ENCODE measurements at regions of chr11 and their contacts with region 1.

Region 1: DNA sequence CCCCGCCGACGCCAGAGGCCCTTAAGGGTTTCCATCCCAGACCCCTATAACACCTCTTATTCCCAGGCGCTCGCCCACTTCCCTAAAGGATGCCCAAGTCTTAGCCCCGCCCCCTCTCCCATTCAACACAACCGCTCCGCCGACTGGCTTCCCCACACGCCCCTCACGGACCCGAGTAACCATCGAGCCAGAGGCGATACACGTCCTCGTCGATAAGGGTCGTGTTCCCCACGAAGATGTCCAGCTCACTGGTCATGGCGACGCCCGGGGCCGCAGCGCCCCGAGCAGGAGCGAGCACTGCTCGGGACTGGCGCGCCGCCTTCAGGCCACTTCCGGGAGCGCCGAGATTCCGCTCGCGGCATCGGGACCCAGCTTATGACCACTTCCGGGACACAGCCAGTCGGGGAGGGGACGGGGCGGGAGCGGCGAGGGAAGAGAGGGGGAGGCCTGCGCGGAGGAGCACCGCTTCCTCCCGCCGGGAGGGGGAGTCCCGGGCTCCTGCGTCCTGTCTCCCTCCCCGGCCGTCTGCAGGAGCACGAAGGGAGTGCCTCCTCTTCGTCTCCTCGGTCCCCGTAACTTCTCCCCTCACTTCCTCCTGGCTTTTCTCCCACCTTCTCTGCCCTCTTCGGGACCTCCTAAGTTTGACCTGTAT is at the start of gene FIBP:
- DNase-seq: peak; percentile 99
- ATAC-seq: peak; percentile 68
- H3K4me3 Mint-ChIP-seq: peak within 1 kb of the TSS; percentile 94
- H3K27ac Mint-ChIP-seq: peak within 1 kb of the TSS; percentile 95
- H3K4me1 Mint-ChIP-seq: peaks cover 57% of the 10 kb centered on the region
- H3K27me3 Mint-ChIP-seq: no peaks in the 10 kb centered on the region
- total RNA-seq, gene FIBP: 95.4 to 121 TPM

Region 2: DNA sequence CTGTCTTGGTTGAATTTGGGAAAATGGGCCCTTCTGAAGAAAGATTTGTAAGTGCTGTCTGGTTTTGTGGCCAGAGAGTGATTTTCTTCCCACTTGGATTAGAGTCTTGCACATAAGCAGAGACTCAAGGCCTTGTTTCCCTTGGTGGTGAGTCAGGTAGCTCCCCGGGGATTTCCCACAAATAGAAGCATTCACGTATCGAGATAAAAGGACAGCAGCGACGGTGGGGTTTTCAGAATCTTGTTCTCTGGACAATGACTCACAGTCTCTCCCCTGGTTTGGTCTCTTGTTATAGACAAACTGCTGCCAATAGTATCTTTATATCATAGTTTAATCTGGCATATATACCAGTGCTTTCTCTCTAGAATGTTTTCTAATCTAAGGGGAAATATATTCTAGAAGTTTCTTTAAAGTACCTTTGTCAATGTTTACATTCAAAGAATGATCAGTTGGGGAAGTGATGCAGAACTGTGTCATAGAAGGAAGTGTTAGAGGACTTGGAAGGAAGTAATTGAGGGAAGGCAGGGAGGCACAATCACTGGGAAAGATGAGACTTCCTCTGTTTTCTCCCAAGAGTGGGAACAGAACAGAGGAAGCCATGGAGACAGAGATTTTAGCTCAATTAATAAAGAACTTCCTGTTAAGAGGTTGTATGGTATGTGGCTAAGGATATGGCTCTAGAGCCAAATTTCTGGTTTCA is 608.4 kb before region 1 on chr11:
- CTCF ChIA-PET with region 1: no interaction called
- POLR2A ChIA-PET with region 1: no interaction called
- intact Hi-C with region 1: no loop called
- DNase-seq: peak; percentile 71
- ATAC-seq: peak; percentile 97
- H3K4me3 Mint-ChIP-seq: no peak overlapping the region
- H3K27ac Mint-ChIP-seq: peak overlapping the region; percentile 79
- H3K4me1 Mint-ChIP-seq: peaks cover 18% of the 10 kb centered on the region
- H3K27me3 Mint-ChIP-seq: no peaks in the 10 kb centered on the region

Region 3: DNA sequence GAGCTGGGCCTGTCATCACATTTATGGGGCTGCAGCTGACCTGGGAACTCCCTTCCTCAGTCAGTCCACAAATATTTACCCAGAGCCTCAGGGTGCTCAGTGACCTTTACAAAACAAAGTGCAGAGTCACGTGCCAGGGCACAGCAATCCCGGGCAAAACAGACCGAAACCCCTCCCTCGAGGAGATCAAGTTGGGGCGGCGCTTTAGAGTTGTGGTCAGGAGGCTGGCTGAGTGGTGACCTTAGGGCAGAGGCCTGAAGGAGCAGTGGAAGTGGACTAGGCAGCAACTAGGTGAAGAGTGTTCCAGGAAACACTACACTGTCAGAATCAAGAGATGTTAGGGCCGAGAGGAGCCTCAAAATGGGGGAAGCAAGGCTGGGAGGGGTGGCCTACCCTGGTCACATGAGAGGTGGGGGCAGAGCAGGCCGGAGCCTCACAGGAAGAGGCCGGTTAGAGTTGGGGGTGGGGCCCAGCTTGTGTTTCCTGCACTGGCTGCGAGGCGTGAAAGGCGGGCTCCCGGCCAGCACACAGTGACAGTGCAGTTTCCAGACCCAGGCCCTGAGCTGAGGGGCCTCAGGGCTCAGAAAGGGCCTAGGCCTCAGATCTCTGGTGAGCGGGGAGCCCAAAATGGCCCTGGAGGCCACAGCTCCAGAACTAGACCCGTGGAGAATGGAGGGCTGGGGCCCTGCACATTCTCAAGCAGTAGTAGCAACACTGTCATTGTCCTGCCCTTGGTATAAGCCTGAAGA is 469.4 kb before region 1 on chr11:
- CTCF ChIA-PET with region 1: interaction called, 3 read pairs
- POLR2A ChIA-PET with region 1: interaction called, 4 read pairs
- intact Hi-C with region 1: loop called in 1 of 2 experiments (anchors 10 kb)
- DNase-seq: peak; percentile 97
- ATAC-seq: peak; percentile 48
- H3K4me3 Mint-ChIP-seq: peak overlapping the region; percentile 100
- H3K27ac Mint-ChIP-seq: peak overlapping the region; percentile 99
- H3K4me1 Mint-ChIP-seq: peaks cover 34% of the 10 kb centered on the region
- H3K27me3 Mint-ChIP-seq: peaks cover 6% of the 10 kb centered on the region

Region 4: GRCh38 chr11:65711785-65712632 is 176.3 kb before region 1 on chr11 and contains the start of gene KAT5:
- CTCF ChIA-PET with region 1: interaction called, 13 read pairs
- POLR2A ChIA-PET with region 1: interaction called, 4 read pairs
- intact Hi-C with region 1: loop called in 1 of 2 experiments (anchors 1 kb)
- DNase-seq: peak; percentile 99
- ATAC-seq: peak; percentile 86
- H3K4me3 Mint-ChIP-seq: peak within 1 kb of the TSS; percentile 90
- H3K27ac Mint-ChIP-seq: peak within 1 kb of the TSS; percentile 96
- H3K4me1 Mint-ChIP-seq: peaks cover 27% of the 10 kb centered on the region
- H3K27me3 Mint-ChIP-seq: no peaks in the 10 kb centered on the region
- total RNA-seq, gene KAT5: 56.5 to 65.1 TPM

Region 5: GRCh38 chr11:65873318-65874156 is 14.8 kb before region 1 on chr11:
- CTCF ChIA-PET with region 1: interaction called, 76 read pairs
- POLR2A ChIA-PET with region 1: interaction called, 6 read pairs
- intact Hi-C with region 1: loop called (anchors 1 to 2 kb)
- DNase-seq: peak; percentile 97
- ATAC-seq: peak; percentile 93
- H3K4me3 Mint-ChIP-seq: peak overlapping the region; percentile 84
- H3K27ac Mint-ChIP-seq: peak overlapping the region; percentile 91
- H3K4me1 Mint-ChIP-seq: peaks cover 15% of the 10 kb centered on the region
- H3K27me3 Mint-ChIP-seq: no peaks in the 10 kb centered on the region

Region 6: DNA sequence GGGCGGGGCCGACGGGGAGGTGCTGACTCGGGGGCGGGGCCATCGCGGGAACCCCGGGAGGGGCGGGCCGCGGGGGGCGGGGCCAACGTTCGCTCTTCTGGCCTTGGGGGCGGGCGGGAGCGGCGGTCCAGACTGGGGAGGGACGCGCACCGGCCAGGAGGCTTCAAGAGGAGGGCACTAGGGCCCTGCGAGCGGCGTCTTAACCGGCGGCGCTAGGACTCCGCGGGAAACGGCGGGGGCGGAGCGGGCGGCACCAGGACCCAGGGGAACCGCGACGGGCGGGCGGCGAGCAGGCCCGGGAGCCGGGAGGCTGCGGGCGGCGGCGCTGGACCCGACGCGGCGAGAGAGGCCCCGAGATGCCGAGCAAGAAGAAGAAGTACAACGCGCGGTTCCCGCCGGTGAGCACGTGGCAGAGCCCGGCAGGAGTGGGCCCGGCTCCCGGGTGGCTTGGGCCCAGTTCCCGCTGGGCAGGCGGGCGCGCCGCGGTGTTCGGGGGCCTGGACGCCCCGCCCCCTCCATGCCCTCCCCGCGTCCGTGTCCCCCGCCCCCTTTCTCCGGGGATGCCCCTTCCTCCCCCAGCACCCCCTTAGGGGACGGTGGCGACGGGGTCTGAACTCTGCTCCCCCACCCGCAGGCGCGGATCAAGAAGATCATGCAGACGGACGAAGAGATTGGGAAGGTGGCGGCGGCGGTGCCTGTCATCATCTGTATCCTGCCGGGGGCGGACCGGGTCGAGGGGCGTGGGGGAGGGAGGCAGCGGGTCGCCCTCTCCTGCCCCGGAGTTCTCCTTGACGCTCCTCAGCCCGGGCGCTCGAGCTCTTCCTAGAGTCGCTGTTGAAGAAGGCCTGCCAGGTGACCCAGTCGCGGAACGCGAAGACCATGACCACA is 31.1 kb after region 1 on chr11 and contains the start of gene DRAP1:
- CTCF ChIA-PET with region 1: interaction called, 10 read pairs
- POLR2A ChIA-PET with region 1: interaction called, 6 read pairs
- intact Hi-C with region 1: loop called (anchors 1 to 2 kb)
- DNase-seq: peak; percentile 100
- ATAC-seq: peak; percentile 94
- H3K4me3 Mint-ChIP-seq: peak within 1 kb of the TSS; percentile 91
- H3K27ac Mint-ChIP-seq: peak within 1 kb of the TSS; percentile 88
- H3K4me1 Mint-ChIP-seq: peaks cover 35% of the 10 kb centered on the region
- H3K27me3 Mint-ChIP-seq: no peaks in the 10 kb centered on the region
- total RNA-seq, gene DRAP1: 111 to 158 TPM

Region 7: DNA sequence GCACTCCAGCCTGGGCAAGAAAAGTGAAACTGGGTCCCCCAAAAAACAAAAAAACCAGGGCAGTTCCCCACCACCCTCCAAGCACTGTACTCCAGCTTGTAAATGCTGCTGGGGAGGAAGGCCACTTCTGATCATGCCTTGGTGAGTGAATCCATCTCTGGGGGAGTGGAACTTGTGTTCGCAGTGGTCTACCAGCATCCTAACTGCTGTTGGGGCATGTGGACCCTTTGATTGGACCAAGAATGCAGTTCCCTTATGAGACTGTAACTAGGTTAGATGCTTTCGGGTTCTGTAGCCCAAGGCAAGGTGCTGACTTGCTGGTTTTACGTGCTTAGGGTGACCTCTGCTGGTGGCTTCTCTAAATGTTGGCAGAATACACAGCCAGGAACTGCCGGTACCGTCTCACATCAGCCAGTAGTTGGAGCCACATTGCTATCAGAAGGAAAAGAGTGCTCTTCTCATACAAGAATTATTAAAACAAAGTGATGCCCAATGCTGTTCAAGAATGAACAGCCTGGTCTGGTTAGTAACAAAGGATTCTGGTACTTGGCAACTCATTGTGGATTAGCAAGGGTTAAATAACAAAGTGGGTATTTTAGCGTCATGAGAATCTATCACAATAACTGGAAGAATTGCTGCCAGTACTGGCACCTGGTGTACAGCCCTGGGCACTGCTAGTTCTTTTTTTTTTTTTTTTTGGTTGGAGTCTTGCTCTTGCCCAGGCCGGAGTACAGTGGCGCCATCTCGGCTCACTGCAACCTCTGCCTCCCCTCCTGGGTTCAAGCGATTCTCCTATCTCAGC is 100.7 kb after region 1 on chr11:
- CTCF ChIA-PET with region 1: interaction called, 42 read pairs
- POLR2A ChIA-PET with region 1: no interaction called
- intact Hi-C with region 1: loop called (anchors 1 kb)
- DNase-seq: peak; percentile 95
- ATAC-seq: peak; percentile 99
- H3K4me3 Mint-ChIP-seq: no peak overlapping the region
- H3K27ac Mint-ChIP-seq: peak overlapping the region; percentile 59
- H3K4me1 Mint-ChIP-seq: peaks cover 2% of the 10 kb centered on the region
- H3K27me3 Mint-ChIP-seq: no peaks in the 10 kb centered on the region

Region 8: GRCh38 chr11:66051766-66052663 is 163.7 kb after region 1 on chr11 and contains the start of gene SF3B2:
- CTCF ChIA-PET with region 1: interaction called, 4 read pairs
- POLR2A ChIA-PET with region 1: interaction called, 4 read pairs
- intact Hi-C with region 1: loop called in 1 of 2 experiments (anchors 1 kb)
- DNase-seq: peak; percentile 99
- ATAC-seq: peak; percentile 99
- H3K4me3 Mint-ChIP-seq: peak within 1 kb of the TSS; percentile 91
- H3K27ac Mint-ChIP-seq: peak within 1 kb of the TSS; percentile 95
- H3K4me1 Mint-ChIP-seq: peaks cover 36% of the 10 kb centered on the region
- H3K27me3 Mint-ChIP-seq: peaks cover 4% of the 10 kb centered on the region
- total RNA-seq, gene SF3B2: 265 to 270 TPM

Region 9: DNA sequence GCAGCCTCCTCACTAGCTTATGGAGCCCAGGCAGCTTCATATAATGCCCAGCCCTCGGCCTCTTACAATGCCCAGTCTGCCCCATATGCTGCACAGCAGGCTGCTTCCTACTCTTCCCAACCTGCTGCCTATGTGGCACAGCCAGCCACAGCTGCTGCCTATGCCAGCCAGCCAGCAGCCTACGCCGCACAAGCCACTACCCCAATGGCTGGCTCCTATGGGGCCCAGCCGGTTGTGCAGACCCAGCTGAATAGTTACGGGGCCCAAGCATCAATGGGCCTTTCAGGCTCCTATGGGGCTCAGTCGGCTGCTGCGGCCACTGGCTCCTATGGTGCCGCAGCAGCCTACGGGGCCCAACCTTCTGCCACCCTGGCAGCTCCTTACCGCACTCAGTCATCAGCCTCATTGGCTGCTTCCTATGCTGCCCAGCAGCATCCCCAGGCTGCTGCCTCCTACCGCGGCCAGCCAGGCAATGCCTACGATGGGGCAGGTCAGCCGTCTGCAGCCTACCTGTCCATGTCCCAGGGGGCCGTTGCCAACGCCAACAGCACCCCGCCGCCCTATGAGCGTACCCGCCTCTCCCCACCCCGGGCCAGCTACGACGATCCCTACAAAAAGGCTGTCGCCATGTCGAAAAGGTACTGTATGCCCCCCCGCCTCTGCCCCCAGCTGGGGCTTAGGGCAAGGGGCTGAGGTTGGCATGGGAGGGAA is 736.9 kb after region 1 on chr11:
- CTCF ChIA-PET with region 1: no interaction called
- POLR2A ChIA-PET with region 1: no interaction called
- intact Hi-C with region 1: no loop called
- DNase-seq: no peak
- ATAC-seq: no peak
- H3K4me3 Mint-ChIP-seq: no peak overlapping the region
- H3K27ac Mint-ChIP-seq: no peak overlapping the region
- H3K4me1 Mint-ChIP-seq: peaks cover 62% of the 10 kb centered on the region
- H3K27me3 Mint-ChIP-seq: no peaks in the 10 kb centered on the region

Region 10: GRCh38 chr11:66651016-66651415 is 762.7 kb after region 1 on chr11:
- CTCF ChIA-PET with region 1: no interaction called
- POLR2A ChIA-PET with region 1: no interaction called
- intact Hi-C with region 1: no loop called
- DNase-seq: no peak
- ATAC-seq: peak; percentile 40
- H3K4me3 Mint-ChIP-seq: no peak overlapping the region
- H3K27ac Mint-ChIP-seq: no peak overlapping the region
- H3K4me1 Mint-ChIP-seq: peaks cover 50% of the 10 kb centered on the region
- H3K27me3 Mint-ChIP-seq: no peaks in the 10 kb centered on the region

Measured in activated CD4-positive, alpha-beta T cell treated with anti-CD3 and anti-CD28 coated beads for 36 hours (primary cell).